GM13976 (cell line): ENCODE measurements at regions of chr10 and their contacts with region 1.

Region 1: DNA sequence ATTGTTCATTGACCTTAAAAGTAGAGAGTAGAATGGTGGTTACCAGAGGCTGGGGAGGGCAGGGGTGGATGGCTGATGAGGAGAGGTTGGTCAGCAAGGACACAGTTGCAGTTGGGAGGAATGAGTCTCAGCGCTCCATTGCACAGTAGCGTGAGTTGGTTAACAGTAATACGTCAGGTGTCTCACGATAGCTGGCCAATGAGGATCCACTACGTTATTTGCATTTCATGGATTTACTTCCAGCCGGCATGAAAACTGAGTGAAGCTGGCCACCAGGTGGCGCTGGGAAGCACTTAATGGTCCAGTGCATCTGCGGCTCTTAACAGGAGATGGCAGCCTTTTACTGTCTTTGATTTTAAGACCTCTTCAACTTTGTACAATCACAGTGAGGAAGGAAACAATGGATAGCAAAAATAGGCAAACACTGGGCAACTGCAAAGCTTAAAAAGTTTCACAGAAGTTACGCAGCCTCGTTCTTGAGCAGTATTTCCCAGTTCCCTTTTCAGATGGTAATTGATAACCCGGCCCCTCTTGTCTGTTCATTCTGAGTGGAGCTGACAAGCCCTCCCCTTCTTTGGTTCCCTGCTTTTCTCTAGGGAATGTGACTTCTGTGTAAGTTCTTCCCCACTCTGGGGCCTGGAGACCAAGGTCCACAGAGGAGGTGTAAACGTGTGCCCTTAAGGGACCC is 23.7 kb downstream of the AKR1E2 start:
- DNase-seq: peak; percentile 67
- CTCF ChIP-seq: peak; percentile 92

Region 2: GRCh38 chr10:4918236-4918635 is 68.5 kb after region 1 on chr10:
- in situ Hi-C with region 1: no loop called
- DNase-seq: no peak
- CTCF ChIP-seq: no peak

Region 3: GRCh38 chr10:5396556-5397300 is 547.0 kb after region 1 on chr10:
- in situ Hi-C with region 1: loop called (anchors 25 kb)
- DNase-seq: no peak
- CTCF ChIP-seq: no peak